Activated naive CD8-positive, alpha-beta T cell treated with anti-CD3 and anti-CD28 coated beads, Interleukin-2, amount 10 ng/mL, durations not matched to agents 7 days and 5 days (primary cell): ENCODE measurements at regions of chr9 and their contacts with region 1.

Region 1: DNA sequence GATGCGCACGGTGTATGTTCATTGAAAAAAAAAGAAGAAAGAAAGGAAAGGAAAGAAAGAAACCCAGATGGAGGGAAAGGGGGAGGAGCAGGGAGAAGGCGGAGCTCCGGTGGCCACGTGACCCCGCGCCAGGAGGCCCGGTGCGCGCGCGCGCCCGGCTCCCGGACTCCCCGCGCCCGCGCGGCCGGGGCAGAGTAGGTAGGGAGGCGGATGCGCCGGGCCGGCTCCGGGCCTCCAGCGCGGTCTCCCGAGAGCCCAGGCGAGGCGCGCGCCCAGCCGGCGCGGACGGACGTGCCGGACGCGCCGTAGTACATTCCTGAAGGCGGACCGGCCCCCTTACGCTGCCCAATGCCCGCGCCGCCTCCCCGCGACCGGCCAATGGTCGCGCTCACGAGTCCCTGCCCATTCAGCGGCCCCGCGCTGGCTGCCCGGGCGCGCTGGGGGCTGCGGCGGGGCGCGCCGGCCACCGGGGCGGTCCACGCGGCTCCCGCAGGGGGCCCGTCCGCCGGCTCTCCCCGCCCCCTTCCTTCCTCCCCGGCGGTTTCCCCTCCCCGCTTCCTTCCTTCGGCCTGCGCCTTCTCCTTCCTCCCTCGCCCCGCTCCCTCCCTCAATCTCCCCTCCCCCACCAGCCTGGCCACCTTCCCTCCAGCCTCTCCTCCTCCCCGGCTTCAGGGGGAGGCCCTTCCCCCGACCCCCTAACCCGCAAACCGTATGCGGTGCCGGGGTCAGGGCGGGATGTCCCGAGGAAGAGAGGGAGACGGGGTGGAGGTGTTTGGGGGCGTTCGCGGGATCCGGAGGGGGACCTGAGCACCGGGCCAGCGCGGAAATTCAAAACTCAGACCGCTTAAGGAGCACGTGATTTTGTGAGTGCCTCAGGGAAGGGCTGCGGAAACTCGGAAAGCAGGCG is 5.8 kb downstream of the PTCH1 start:
- DNase-seq: peak; percentile 88
- ATAC-seq: peak; percentile 66
- H3K4me3 Mint-ChIP-seq: peak overlapping the region; percentile 91
- H3K27ac Mint-ChIP-seq: peak overlapping the region; percentile 84
- H3K4me1 Mint-ChIP-seq: peaks cover 31% of the 10 kb centered on the region
- H3K27me3 Mint-ChIP-seq: peaks cover 51% of the 10 kb centered on the region

Region 2: GRCh38 chr9:95462249-95463147 is 48.5 kb before region 1 on chr9:
- POLR2A ChIA-PET with region 1: interaction called, 13 read pairs
- DNase-seq: peak; percentile 81
- ATAC-seq: peak; percentile 95
- H3K4me3 Mint-ChIP-seq: peak overlapping the region; percentile 81
- H3K27ac Mint-ChIP-seq: peak overlapping the region; percentile 83
- H3K4me1 Mint-ChIP-seq: peaks cover 36% of the 10 kb centered on the region
- H3K27me3 Mint-ChIP-seq: peaks cover 10% of the 10 kb centered on the region

Region 3: DNA sequence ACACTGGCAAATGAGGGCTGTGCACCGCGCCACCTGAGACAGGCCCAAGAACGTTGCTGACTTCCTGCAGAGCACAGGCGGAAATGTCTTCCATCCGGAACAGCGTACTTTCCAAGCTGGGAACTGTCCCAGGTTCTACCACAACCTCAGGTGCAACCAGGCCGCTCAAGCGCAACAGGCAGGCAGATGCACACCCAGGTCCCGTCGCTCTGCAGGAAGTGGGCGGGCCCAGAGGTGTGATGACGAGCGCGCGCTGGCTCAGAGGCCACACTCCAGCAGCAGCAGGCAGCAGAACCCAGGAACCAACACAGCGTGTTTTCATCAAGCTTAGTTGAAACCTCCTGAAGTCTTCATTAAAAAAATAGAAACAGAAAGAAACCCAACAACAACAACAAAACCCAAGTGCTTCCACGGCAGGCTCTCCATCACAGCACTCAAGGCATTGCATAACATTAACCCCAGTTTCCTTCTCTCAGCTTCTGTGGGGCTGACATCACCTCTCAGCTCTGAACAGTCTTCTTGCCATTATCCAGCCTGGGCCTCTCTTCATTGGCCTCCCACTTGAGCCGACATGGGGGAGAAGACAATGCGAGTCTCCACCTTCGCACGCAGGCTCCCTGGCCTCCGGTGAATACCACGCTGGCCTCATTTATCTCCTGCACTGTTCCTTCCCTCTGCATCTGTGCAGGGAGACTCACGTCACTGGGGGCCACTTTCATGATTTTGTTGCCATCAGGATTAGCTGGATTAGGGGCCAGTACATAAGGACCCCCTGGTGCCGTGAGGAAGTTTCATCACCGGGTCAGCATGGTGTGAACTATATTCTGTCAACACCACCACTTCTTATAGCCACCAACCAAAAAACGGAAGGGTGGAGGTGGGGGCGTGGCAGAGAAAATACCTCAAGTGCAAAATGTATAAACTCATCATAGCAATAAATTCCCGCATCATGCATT is 16.3 kb before region 1 on chr9:
- POLR2A ChIA-PET with region 1: interaction called, 11 read pairs
- DNase-seq: peak; percentile 85
- ATAC-seq: peak; percentile 95
- H3K4me3 Mint-ChIP-seq: peak overlapping the region; percentile 84
- H3K27ac Mint-ChIP-seq: peak overlapping the region; percentile 96
- H3K4me1 Mint-ChIP-seq: peaks cover 33% of the 10 kb centered on the region
- H3K27me3 Mint-ChIP-seq: no peaks in the 10 kb centered on the region